ENCODE measurements at regions of chr7 and their contacts with region 1.

Region 1: DNA sequence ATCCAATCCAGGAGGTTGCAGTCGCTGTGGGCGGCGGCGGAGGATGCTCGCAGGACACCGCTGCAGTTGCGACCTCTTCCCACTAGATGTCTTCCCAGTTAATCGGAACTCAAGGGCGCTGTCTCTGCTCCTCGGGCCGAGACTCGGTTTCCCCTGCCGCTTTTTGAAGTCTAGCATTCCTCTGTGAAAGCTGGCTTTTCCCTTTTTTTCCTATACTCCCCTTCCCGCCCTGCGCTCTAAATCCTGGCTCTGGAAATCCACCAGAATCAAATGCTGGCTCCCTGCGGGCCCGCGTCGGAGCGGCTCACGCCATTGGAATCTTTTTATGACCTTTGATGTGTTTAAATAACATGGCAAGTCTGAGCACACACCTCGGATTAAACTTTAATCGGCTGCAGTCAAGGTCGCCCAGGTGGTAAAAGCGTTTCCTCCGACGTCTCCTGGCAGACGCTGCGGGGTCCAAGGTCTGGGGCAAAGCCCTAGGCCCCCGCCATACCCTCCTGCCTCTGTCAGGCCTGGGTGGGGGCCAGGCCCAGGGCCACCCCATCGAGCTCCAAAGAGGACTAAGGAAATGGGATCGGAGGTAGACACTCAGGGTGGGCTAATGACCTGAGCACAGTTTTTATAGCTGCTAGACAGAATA is 10.7 kb upstream of the HOXA13 start:
- DNase-seq: peak; percentile 67
- H3K4me3 Mint-ChIP-seq: no peak overlapping the region
- H3K27ac Mint-ChIP-seq: no peak overlapping the region
- H3K4me1 Mint-ChIP-seq: peaks cover 20% of the 10 kb centered on the region
- H3K27me3 Mint-ChIP-seq: peaks cover 80% of the 10 kb centered on the region

Region 2: DNA sequence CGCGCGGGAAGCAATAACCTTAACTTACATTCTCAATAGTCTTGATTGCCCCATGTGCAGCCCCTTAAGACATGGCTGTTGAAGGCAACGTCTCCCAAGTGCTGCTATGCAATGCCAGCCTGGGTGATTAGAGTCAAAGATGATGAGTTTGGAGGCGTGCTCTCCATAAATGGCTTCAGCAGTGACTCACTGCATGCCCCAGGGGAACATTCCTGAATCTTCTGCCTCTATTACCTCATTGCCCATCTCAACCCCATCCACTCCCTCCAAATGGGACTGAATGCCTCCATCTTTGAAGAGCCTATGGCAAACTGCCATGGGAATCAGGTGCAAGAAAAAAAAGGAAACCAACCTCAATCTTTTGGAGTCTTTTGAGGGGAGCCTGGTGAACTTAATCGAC is 636.1 kb before region 1 on chr7:
- CTCF ChIA-PET with region 1: no interaction called
- intact Hi-C with region 1: no loop called
- DNase-seq: no peak
- H3K4me3 Mint-ChIP-seq: no peak overlapping the region
- H3K27ac Mint-ChIP-seq: no peak overlapping the region
- H3K4me1 Mint-ChIP-seq: no peaks in the 10 kb centered on the region
- H3K27me3 Mint-ChIP-seq: peaks cover 15% of the 10 kb centered on the region

Region 3: GRCh38 chr7:27110186-27111031 is 100.2 kb before region 1 on chr7:
- CTCF ChIA-PET with region 1: no interaction called
- intact Hi-C with region 1: no loop called
- DNase-seq: no peak
- H3K4me3 Mint-ChIP-seq: no peak overlapping the region
- H3K27ac Mint-ChIP-seq: no peak overlapping the region
- H3K4me1 Mint-ChIP-seq: no peaks in the 10 kb centered on the region
- H3K27me3 Mint-ChIP-seq: peaks cover 13% of the 10 kb centered on the region

Region 4: GRCh38 chr7:27221201-27221797 is 10.7 kb after region 1 on chr7:
- CTCF ChIA-PET with region 1: interaction called, 5 read pairs
- intact Hi-C with region 1: loop called (anchors 1 kb)
- DNase-seq: no peak
- H3K4me3 Mint-ChIP-seq: no peak overlapping the region
- H3K27ac Mint-ChIP-seq: no peak overlapping the region
- H3K4me1 Mint-ChIP-seq: peaks cover 14% of the 10 kb centered on the region
- H3K27me3 Mint-ChIP-seq: peaks cover 64% of the 10 kb centered on the region

Region 5: DNA sequence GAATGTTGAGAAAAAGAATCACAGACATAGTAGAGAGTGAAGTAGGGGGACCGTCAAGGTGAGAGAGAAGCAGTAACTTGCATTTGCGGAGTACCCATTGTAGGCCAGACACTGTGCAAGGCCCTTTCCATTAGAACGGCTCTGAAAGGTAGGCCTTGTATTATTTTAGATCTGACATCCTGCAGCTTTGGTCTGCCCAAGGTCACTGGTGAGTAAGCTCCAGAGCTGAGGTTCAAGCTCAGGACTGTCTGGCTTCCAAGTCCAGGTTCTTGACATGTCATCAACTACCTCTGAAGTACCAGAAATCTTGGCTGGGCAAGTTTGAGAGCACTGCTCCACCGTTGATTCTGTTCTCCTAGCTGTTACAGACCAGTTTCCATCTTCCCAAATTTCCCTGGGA is 18.9 kb after region 1 on chr7:
- CTCF ChIA-PET with region 1: interaction called, 10 read pairs
- intact Hi-C with region 1: no loop called
- DNase-seq: no peak
- H3K4me3 Mint-ChIP-seq: no peak overlapping the region
- H3K27ac Mint-ChIP-seq: no peak overlapping the region
- H3K4me1 Mint-ChIP-seq: peaks cover 2% of the 10 kb centered on the region
- H3K27me3 Mint-ChIP-seq: peaks cover 32% of the 10 kb centered on the region

Region 6: GRCh38 chr7:27262121-27262520 is 51.6 kb after region 1 on chr7:
- CTCF ChIA-PET with region 1: no interaction called
- intact Hi-C with region 1: no loop called
- DNase-seq: no peak
- H3K4me3 Mint-ChIP-seq: no peak overlapping the region
- H3K27ac Mint-ChIP-seq: no peak overlapping the region
- H3K4me1 Mint-ChIP-seq: no peaks in the 10 kb centered on the region
- H3K27me3 Mint-ChIP-seq: peaks cover 24% of the 10 kb centered on the region

Region 7: DNA sequence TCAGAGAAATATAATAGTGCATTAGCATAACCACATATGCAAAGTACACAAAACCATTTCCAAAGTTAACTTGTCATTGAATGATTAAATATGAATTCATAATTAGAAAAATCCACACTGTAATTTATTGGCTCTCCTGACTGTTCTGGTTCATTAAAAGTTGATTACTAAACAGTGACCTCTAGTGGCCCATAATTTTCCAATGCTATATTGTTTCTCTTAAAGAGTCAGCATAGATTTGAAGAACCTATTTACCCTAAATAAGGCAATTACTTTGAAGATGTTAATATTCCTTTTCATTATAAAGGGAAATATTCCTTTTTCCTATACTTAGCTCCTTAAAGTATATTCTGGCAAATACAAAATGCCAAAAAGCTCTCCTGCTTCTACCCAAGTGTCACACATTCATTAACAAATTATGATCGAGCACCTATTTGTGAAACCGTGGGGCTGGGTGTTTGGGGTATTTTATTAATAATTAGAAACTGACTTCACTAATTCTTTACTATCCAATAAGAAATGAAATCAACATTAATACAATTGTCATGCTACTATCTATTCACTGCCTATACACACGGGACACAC is 365.9 kb after region 1 on chr7:
- CTCF ChIA-PET with region 1: interaction called, 12 read pairs
- intact Hi-C with region 1: loop called (anchors 2 kb)
- DNase-seq: no peak
- H3K4me3 Mint-ChIP-seq: no peak overlapping the region
- H3K27ac Mint-ChIP-seq: no peak overlapping the region
- H3K4me1 Mint-ChIP-seq: no peaks in the 10 kb centered on the region
- H3K27me3 Mint-ChIP-seq: no peaks in the 10 kb centered on the region

Measured in activated naive CD4-positive, alpha-beta T cell treated with anti-CD3 and anti-CD28 coated beads for 36 hours (primary cell).